ENCODE measurements at regions of chr7 and their contacts with region 1.

Region 1: GRCh38 chr7:136030862-136031318 is 53.7 kb upstream of the MTPN start:
- DNase-seq: no peak
- H3K4me3 Mint-ChIP-seq: no peak overlapping the region
- H3K27ac Mint-ChIP-seq: peak overlapping the region; percentile 54
- H3K4me1 Mint-ChIP-seq: peaks cover 12% of the 10 kb centered on the region
- H3K27me3 Mint-ChIP-seq: peaks cover 1% of the 10 kb centered on the region

Region 2: DNA sequence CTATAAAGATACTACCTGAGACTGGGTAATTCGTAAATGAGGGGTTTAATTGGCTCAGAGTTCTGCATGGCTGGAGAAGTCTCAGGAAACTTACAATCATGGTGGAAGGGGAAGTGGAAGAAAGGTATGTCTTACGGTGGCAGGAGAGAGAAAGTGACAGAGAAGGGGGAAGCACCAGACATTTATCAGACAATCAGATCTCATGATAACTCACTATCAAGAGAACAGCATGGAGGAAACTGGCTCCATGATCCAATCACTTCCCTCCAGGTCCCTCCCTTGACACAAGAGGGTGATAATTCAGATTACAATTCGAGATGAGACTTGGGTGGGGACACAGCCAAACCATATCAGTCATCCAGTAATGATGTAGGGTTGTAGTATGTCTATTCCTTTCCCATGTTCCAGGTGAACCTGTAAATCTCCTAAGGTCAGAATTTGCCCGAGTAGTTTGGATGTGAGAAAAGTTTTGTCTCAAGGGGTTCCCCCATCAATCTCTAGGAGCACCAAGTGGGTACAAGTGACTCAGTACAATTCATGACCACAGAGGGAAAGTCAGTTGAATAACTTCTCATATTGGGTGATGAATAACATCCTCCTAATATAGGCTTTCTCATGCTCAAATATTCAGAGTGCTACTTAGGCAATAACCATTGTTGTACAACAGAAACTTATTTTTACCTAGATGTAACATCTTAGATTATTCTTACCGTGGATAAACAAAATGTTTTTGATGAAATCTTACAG is 14.1 kb before region 1 on chr7:
- intact Hi-C with region 1: loop called (anchors 2 kb)
- DNase-seq: no peak
- H3K4me3 Mint-ChIP-seq: no peak overlapping the region
- H3K27ac Mint-ChIP-seq: no peak overlapping the region
- H3K4me1 Mint-ChIP-seq: peaks cover 8% of the 10 kb centered on the region
- H3K27me3 Mint-ChIP-seq: peaks cover 5% of the 10 kb centered on the region

Region 3: GRCh38 chr7:136064081-136064480 is 33.2 kb after region 1 on chr7:
- intact Hi-C with region 1: loop called (anchors 1 kb)
- DNase-seq: no peak
- H3K4me3 Mint-ChIP-seq: no peak overlapping the region
- H3K27ac Mint-ChIP-seq: peak overlapping the region; percentile 40
- H3K4me1 Mint-ChIP-seq: peaks cover 10% of the 10 kb centered on the region
- H3K27me3 Mint-ChIP-seq: peaks cover 2% of the 10 kb centered on the region

Region 4: GRCh38 chr7:136130819-136131643 is 100.1 kb after region 1 on chr7:
- intact Hi-C with region 1: loop called (anchors 2 kb)
- DNase-seq: no peak
- H3K4me3 Mint-ChIP-seq: no peak overlapping the region
- H3K27ac Mint-ChIP-seq: no peak overlapping the region
- H3K4me1 Mint-ChIP-seq: peaks cover 3% of the 10 kb centered on the region
- H3K27me3 Mint-ChIP-seq: no peaks in the 10 kb centered on the region